Stomach (tissue), 19 donors: ENCODE measurements at regions of chr5 and their contacts with region 1.

Region 1: DNA sequence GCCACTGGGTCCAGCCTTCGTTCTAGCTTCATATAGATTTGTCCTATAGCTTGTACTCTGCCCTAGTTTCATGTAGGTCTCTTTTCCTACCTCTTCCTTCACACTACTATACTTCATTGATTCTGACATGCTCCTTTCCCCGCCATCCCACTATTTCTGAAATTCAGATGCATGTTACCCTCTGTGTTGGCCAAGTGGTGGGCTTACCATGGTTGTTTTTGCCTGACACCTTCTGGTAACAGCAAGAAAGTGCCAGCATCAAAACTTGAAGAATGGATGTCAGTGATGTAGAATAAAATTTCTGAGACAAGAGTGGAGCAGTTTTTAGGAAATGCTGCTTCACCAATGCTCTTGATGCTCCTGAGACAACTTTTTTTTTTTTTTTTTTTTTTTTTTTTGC is 19.5 kb upstream of the SERINC5 start:
- DNase-seq: peak in 1 of 2 donors; percentile 74
- H3K4me3 ChIP-seq: no peak overlapping the region
- H3K27ac ChIP-seq: no peak overlapping the region
- H3K4me1 ChIP-seq: no peaks in the 10 kb centered on the region
- H3K27me3 ChIP-seq: no peaks in the 10 kb centered on the region
- CTCF ChIP-seq: peak in 2 of 7 experiments; percentile 25 to 47
- EP300 ChIP-seq: no peak
- POLR2A ChIP-seq: no peak

Region 2: DNA sequence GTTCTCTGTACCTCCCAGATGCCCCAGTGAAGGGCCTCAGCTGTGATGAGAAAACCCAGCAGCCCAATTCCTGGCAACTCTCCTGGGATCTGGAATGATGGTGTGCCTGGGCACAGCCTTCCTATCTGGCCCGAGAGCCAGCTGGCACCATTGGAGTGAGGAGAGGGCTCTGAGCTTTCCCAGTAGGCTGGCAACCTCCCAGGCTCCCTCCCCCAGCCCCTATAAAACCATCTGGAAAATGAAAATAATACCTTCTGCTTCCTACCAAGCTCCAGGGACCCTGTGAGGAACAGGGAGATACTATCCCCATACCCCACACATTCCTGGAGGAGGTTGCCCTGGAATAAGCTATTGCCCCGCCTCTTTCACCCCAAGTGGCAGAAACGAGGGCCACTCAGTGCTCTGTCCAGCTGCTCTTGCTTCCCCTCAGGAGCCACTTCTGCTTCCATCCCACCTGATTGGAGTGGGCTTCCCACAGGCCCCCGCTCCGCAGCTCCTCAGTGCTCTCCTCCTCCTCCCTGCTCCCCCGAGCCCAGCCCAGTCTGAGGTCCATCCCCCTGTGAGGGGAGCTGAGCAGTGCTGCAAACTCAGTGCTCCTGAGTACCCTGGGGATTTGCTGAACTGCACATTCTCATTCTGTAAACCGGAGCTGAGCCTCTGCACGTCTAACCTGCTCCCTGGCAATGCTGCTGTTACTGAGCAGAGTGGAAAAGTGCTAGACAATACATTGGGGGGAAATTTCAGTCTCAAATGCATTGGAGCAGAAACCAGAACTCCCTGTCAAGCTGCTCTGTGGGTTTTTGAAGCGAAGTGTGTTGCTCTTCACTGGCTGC is 165.5 kb before region 1 on chr5:
- intact Hi-C with region 1: loop called (anchors 10 kb)
- DNase-seq: peak in 1 of 2 donors; percentile 83
- H3K4me3 ChIP-seq: no peak overlapping the region
- H3K27ac ChIP-seq: peak overlapping the region in 2 of 5 donors; percentile 22 to 68
- H3K4me1 ChIP-seq: peaks cover 0 to 27% (median 4%) of the 10 kb centered on the region in 4 donors
- H3K27me3 ChIP-seq: no peaks in the 10 kb centered on the region
- CTCF ChIP-seq: no peak
- EP300 ChIP-seq: no peak
- POLR2A ChIP-seq: no peak

Region 3: DNA sequence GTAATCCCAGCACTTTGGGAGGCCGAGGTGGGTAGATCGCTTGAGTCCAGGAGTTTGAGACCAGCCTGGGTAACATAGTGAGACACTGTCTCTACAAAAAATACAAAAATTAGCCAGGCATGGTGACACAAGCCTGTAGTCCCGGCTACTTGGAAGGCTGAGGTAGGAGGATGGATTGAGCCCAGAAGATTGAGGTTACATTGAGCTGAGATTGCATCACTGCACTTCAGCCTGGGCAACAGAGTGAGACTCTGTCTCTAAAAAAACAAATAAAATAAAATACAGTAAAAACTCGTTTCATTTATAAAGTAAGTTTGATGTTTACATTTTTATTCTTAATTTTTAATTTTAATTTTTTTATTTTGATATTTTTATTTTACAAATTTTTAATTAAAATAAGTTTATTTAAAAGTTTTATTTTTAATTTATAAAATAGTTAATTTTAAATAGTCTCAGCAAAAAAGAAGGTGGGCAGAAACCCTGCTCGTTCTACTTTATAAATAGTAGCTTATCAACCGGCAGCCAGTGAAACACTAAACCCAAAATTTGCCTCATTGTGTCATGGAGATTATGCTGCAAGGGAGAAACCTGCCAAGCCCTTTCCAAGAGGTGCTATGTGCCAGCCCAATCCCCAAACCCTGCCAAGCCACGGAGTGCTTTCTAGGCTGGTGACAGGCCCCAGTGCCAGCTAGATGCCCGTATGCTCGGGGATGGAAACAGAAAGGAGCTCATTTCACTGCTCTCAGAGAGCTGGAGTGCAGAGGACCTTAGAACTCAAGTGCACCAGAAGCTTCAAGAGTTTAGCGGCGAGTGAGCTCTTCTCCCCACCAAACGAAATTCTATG is 58.4 kb before region 1 on chr5:
- intact Hi-C with region 1: no loop called
- DNase-seq: peak; percentile 47 to 89
- H3K4me3 ChIP-seq: peak overlapping the region in 1 of 4 donors; percentile 8
- H3K27ac ChIP-seq: peak overlapping the region; percentile 43 to 76 (median 64)
- H3K4me1 ChIP-seq: peaks cover 31 to 71% (median 59%) of the 10 kb centered on the region in 4 donors
- H3K27me3 ChIP-seq: no peaks in the 10 kb centered on the region
- CTCF ChIP-seq: no peak
- EP300 ChIP-seq: no peak
- POLR2A ChIP-seq: no peak